Tibial artery (tissue), 4 donors: ENCODE measurements at regions of chr16 and their contacts with region 1.

Region 1: GRCh38 chr16:15765880-15766279 is 90.9 kb downstream of the MYH11 start:
- DNase-seq: no peak
- H3K4me3 ChIP-seq: no peak overlapping the region
- H3K27ac ChIP-seq: peak overlapping the region; percentile 53 to 74
- H3K4me1 ChIP-seq: peaks cover 0 to 53% (median 9%) of the 10 kb centered on the region in 4 donors
- H3K27me3 ChIP-seq: no peaks in the 10 kb centered on the region
- CTCF ChIP-seq: peak; percentile 49 to 52

Region 2: GRCh38 chr16:15847611-15848175 is 81.8 kb after region 1 on chr16:
- intact Hi-C with region 1: loop called (anchors 5 kb)
- DNase-seq: peak in 1 of 2 donors; percentile 58
- H3K4me3 ChIP-seq: peak overlapping the region; percentile 61 to 74
- H3K27ac ChIP-seq: peak overlapping the region; percentile 89 to 97
- H3K4me1 ChIP-seq: peaks cover 0 to 99% (median 45%) of the 10 kb centered on the region in 4 donors
- H3K27me3 ChIP-seq: no peaks in the 10 kb centered on the region
- CTCF ChIP-seq: no peak

Region 3: DNA sequence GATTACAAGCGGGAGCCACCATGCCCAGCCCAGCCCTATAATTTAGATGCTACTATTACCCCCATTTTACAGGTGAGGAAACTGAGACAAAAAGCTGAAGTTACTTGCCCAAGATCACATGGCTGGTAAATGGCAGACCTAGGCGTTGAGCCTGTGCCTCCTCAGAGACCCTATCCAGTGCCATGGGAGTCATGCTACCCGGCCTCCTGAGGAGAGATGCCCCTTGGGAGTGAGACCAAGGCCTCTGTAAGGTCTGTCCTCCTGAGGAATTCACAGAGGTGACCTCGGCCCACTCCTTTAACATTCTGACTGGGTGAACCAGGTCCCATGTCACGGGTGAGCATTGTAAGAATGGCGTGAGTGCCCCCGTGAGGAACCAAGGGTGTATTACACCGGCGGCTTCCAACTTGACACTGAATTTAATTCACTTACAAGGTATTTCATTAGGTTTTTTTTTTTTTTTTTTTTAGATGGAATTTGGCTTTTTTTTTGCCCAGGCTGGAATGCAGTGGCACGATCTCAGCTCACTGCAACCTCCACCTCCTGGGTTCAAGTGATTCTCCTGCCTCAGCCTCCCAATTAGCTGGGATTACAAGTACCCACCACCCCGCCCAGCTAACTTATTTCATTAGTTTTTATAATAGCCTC is 361.7 kb after region 1 on chr16:
- intact Hi-C with region 1: loop called (anchors 10 kb)
- DNase-seq: peak; percentile 69 to 82
- H3K4me3 ChIP-seq: no peak overlapping the region
- H3K27ac ChIP-seq: peak overlapping the region in 1 of 2 donors; percentile 52
- H3K4me1 ChIP-seq: peaks cover 0 to 4% (median 1%) of the 10 kb centered on the region in 4 donors
- H3K27me3 ChIP-seq: no peaks in the 10 kb centered on the region
- CTCF ChIP-seq: peak; percentile 84 to 89